WTC11 (cell line): ENCODE measurements at regions of chr12 and their contacts with region 1.

Region 1: DNA sequence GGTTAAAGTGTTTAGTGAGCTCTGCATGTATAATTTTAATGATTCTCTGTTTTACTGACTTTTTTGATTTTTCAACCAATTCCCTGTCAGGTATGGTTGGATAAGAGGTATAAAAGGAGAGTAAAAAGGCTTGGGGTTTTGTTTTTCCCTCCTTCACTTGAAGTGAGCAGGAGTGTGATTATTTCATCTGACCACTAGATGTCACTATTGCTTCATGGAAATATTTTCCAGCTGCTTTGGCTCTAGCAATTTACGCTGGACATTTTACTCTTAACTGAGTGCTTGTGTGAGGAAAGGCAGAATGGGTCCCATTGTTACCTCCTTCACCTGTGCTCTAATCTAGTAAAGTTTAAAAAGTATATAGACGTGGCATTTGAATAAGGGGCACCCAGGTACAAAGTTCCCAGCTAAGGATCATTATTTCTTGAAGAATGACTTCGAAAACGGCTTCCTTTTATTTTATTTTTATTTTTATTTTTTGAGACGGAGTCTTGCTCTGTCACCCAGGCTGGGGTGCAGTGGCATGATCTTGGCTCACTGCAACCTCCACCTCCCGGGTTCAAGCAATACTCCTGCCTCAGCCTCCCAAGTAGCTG is 66.5 kb downstream of the TBC1D30 start:
- DNase-seq: no peak
- ATAC-seq: peak; percentile 38
- H3K4me3 Mint-ChIP-seq: no peak overlapping the region
- H3K27ac Mint-ChIP-seq: no peak overlapping the region
- H3K4me1 Mint-ChIP-seq: peaks cover 29% of the 10 kb centered on the region
- H3K27me3 Mint-ChIP-seq: peaks cover 48% of the 10 kb centered on the region
- CTCF ChIP-seq: peak; percentile 70

Region 2: GRCh38 chr12:64912516-64913255 is 21.7 kb after region 1 on chr12:
- CTCF ChIA-PET with region 1: no interaction called
- POLR2A ChIA-PET with region 1: no interaction called
- DNase-seq: no peak
- ATAC-seq: no peak
- H3K4me3 Mint-ChIP-seq: no peak overlapping the region
- H3K27ac Mint-ChIP-seq: no peak overlapping the region
- H3K4me1 Mint-ChIP-seq: peaks cover 14% of the 10 kb centered on the region
- H3K27me3 Mint-ChIP-seq: no peaks in the 10 kb centered on the region
- CTCF ChIP-seq: no peak

Region 3: GRCh38 chr12:65100140-65100539 is 209.2 kb after region 1 on chr12:
- CTCF ChIA-PET with region 1: interaction called, 15 read pairs
- POLR2A ChIA-PET with region 1: no interaction called
- DNase-seq: no peak
- ATAC-seq: peak; percentile 79
- H3K4me3 Mint-ChIP-seq: no peak overlapping the region
- H3K27ac Mint-ChIP-seq: no peak overlapping the region
- H3K4me1 Mint-ChIP-seq: peaks cover 16% of the 10 kb centered on the region
- H3K27me3 Mint-ChIP-seq: peaks cover 8% of the 10 kb centered on the region
- CTCF ChIP-seq: peak; percentile 28; the same call in 1 of the 2 replicates

Region 4: GRCh38 chr12:65106948-65107347 is 216.0 kb after region 1 on chr12:
- CTCF ChIA-PET with region 1: interaction called, 15 read pairs
- POLR2A ChIA-PET with region 1: no interaction called
- DNase-seq: no peak
- ATAC-seq: no peak
- H3K4me3 Mint-ChIP-seq: no peak overlapping the region
- H3K27ac Mint-ChIP-seq: no peak overlapping the region
- H3K4me1 Mint-ChIP-seq: peaks cover 9% of the 10 kb centered on the region
- H3K27me3 Mint-ChIP-seq: peaks cover 2% of the 10 kb centered on the region; the same call in 1 of the 2 replicates
- CTCF ChIP-seq: no peak

Region 5: GRCh38 chr12:65121049-65121955 is 230.3 kb after region 1 on chr12 and contains the start of gene WIF1:
- CTCF ChIA-PET with region 1: interaction called, 50 read pairs
- POLR2A ChIA-PET with region 1: no interaction called
- DNase-seq: peak; percentile 76
- ATAC-seq: peak; percentile 86
- H3K4me3 Mint-ChIP-seq: peak within 1 kb of the TSS; percentile 55
- H3K27ac Mint-ChIP-seq: no peak within 1 kb of the TSS
- H3K4me1 Mint-ChIP-seq: peaks cover 5% of the 10 kb centered on the region; the same call in 1 of the 2 replicates
- H3K27me3 Mint-ChIP-seq: peaks cover 52% of the 10 kb centered on the region
- CTCF ChIP-seq: peak; percentile 88
- total RNA-seq, gene WIF1: 0.69 to 1.8 TPM (median 1.5 TPM) in 3 replicates